Activated CD4-positive, alpha-beta memory T cell treated with anti-CD3 and anti-CD28 coated beads for 36 hours (primary cell): ENCODE measurements at regions of chr13 and their contacts with region 1.

Region 1: DNA sequence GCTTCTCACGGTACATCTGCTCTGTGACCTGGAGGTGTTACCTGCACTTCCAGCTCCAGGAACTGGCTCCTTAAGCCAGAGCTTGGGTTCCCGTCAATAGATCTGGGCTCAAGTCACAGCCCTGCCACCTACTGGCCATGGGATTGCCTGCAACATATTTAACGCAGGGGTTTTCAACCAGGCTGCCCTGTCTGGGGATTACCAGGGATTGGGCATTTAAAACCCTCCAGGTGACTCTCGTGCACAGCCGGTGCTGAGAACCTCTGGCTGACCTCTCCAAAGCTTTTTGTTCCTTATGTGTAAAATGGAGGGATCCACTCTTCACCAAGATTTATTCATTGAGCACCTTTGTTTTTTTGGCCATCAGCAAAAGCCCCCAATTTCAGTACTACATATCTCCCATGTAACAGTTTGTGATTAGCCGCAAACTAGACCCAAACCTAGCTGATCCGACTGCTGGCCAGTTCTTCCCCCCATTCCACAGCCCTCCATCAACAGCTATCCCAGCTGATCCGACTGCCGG is 76.6 kb upstream of the STK24 start:
- DNase-seq: peak; percentile 85
- H3K4me3 Mint-ChIP-seq: no peak overlapping the region
- H3K27ac Mint-ChIP-seq: no peak overlapping the region
- H3K4me1 Mint-ChIP-seq: peaks cover 5% of the 10 kb centered on the region
- H3K27me3 Mint-ChIP-seq: peaks cover 4% of the 10 kb centered on the region

Region 2: DNA sequence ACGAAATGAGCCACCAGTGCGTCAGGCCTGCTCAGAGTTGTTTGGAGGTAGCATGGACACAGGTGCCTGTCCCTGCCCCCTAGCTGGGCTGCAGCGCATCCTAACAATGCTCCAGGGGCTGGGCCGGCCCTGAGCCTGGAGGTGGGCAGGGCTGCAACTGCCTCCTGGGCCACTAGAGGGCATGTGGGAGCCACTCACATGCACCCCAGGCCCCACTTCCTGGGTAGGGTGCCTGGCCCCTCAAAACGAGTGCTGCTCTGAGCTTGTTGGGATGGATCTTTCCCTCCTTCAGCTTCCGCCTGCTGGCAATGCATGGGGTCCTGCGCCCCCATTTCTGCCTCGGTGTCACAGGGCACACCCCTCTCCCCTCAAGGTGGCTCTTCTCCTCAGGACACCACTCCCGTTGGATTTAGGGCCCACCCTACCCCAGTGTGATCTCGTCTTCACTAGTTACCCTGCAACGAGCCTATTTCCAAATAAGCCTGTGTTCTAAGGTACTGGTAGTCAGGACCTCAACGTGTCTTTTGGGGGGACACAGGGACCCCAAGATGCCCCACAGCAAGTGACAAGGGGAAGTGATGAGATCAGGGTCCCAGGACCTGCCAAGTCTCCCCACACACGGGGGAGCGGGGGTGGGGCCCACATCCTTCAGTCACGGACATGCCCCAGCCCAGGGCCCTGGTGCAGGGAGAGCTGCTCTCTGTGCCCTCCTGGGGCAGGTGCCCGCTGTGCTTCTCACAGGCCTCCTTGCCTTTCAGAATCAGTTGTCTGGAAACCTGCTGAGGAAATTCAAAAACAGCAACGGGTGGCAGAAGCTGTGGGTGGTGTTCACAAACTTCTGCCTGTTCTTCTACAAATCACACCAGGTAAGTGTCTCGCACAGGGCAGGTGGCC is 207.9 kb before region 1 on chr13:
- CTCF ChIA-PET with region 1: interaction called, 155 read pairs
- POLR2A ChIA-PET with region 1: interaction called, 16 read pairs
- intact Hi-C with region 1: loop called (anchors 1 kb)
- DNase-seq: peak; percentile 88
- H3K4me3 Mint-ChIP-seq: no peak overlapping the region
- H3K27ac Mint-ChIP-seq: peak overlapping the region; percentile 83
- H3K4me1 Mint-ChIP-seq: peaks cover 17% of the 10 kb centered on the region
- H3K27me3 Mint-ChIP-seq: no peaks in the 10 kb centered on the region

Region 3: DNA sequence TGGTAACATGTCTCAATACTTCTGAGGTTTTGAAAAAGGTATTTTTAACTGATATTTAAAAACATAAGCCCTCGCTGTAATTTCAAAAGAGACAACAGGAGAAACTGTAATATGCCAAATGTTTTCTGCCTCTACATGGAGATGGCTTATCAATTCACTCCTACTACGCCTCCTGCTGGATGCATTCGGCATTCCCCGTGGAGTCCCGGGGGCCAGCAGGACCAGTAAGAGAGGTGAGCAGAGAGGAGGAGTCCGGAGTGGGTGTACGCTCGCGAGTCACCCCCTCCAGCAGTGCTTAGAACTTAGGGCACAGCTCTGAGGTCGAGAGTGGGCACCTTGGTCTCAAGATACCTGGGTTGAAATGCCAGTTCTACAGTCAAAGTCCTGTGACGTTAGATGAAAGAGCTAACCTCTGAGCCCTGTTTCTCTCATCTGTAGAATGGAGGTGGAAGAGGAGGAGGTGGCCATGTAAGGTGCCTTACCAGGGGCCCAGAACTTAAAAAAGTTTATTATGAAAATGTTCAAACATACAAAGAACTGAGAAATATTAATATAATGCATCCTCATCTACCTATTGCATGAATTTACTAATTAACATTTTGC is 186.8 kb before region 1 on chr13:
- CTCF ChIA-PET with region 1: interaction called, 33 read pairs
- POLR2A ChIA-PET with region 1: no interaction called
- intact Hi-C with region 1: no loop called
- DNase-seq: peak; percentile 64
- H3K4me3 Mint-ChIP-seq: no peak overlapping the region
- H3K27ac Mint-ChIP-seq: peak overlapping the region; percentile 38
- H3K4me1 Mint-ChIP-seq: peaks cover 19% of the 10 kb centered on the region
- H3K27me3 Mint-ChIP-seq: no peaks in the 10 kb centered on the region

Region 4: GRCh38 chr13:98484289-98485219 is 169.0 kb before region 1 on chr13:
- CTCF ChIA-PET with region 1: interaction called, 41 read pairs
- POLR2A ChIA-PET with region 1: no interaction called
- intact Hi-C with region 1: no loop called
- DNase-seq: peak; percentile 87
- H3K4me3 Mint-ChIP-seq: peak overlapping the region; percentile 30
- H3K27ac Mint-ChIP-seq: peak overlapping the region; percentile 83
- H3K4me1 Mint-ChIP-seq: peaks cover 92% of the 10 kb centered on the region
- H3K27me3 Mint-ChIP-seq: no peaks in the 10 kb centered on the region

Region 5: DNA sequence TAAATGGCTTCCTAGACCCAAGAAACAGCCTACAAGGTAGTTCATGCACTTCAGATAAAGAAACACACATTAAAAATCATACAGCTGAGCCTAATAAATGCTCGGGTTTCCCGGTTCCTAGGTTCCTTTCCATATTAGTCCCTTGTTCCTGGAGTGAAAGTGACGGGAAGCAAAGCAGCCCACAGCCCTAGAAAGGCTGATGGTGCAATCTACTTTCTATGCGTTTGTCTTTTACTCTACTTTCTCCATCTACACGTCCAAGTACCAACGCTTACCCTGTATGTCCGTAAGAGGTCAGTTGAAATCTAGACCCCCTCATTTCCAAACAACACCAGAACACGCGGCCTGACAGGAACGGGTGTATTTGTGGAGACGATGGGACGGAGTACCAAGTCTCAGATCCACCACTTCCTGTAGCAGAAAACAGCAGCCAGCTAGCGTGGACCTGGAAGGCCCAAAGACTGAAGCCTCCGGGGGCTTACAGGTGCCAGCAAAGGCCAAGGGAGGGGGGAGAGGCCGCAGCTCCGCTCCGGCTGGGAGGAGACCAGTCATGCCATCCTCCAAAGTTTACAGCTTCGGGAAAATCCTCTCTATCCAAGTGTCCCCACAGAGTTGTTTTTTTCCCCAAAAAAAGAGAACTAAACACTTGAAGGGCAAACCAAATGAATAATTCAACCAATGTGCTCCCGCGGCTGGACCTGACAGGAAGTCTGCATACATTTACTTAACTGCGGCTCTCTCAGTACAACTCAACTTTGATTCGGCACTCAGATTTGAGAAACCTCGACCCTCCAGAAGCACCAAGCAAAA is 110.8 kb before region 1 on chr13:
- CTCF ChIA-PET with region 1: interaction called, 12 read pairs
- POLR2A ChIA-PET with region 1: no interaction called
- intact Hi-C with region 1: no loop called
- DNase-seq: peak; percentile 54
- H3K4me3 Mint-ChIP-seq: peak overlapping the region; percentile 68
- H3K27ac Mint-ChIP-seq: peak overlapping the region; percentile 83
- H3K4me1 Mint-ChIP-seq: peaks cover 94% of the 10 kb centered on the region
- H3K27me3 Mint-ChIP-seq: no peaks in the 10 kb centered on the region

Region 6: GRCh38 chr13:98664039-98664438 is 10.5 kb after region 1 on chr13:
- CTCF ChIA-PET with region 1: interaction called, 12 read pairs
- POLR2A ChIA-PET with region 1: no interaction called
- intact Hi-C with region 1: no loop called
- DNase-seq: peak; percentile 87
- H3K4me3 Mint-ChIP-seq: no peak overlapping the region
- H3K27ac Mint-ChIP-seq: peak overlapping the region; percentile 56
- H3K4me1 Mint-ChIP-seq: peaks cover 16% of the 10 kb centered on the region
- H3K27me3 Mint-ChIP-seq: peaks cover 9% of the 10 kb centered on the region

Region 7: GRCh38 chr13:98775844-98776598 is 122.5 kb after region 1 on chr13:
- CTCF ChIA-PET with region 1: no interaction called
- POLR2A ChIA-PET with region 1: no interaction called
- intact Hi-C with region 1: no loop called
- DNase-seq: no peak
- H3K4me3 Mint-ChIP-seq: no peak overlapping the region
- H3K27ac Mint-ChIP-seq: no peak overlapping the region
- H3K4me1 Mint-ChIP-seq: no peaks in the 10 kb centered on the region
- H3K27me3 Mint-ChIP-seq: peaks cover 12% of the 10 kb centered on the region